Heart left ventricle (tissue), 16 donors: ENCODE measurements at regions of chr9 and their contacts with region 1.

Region 1: DNA sequence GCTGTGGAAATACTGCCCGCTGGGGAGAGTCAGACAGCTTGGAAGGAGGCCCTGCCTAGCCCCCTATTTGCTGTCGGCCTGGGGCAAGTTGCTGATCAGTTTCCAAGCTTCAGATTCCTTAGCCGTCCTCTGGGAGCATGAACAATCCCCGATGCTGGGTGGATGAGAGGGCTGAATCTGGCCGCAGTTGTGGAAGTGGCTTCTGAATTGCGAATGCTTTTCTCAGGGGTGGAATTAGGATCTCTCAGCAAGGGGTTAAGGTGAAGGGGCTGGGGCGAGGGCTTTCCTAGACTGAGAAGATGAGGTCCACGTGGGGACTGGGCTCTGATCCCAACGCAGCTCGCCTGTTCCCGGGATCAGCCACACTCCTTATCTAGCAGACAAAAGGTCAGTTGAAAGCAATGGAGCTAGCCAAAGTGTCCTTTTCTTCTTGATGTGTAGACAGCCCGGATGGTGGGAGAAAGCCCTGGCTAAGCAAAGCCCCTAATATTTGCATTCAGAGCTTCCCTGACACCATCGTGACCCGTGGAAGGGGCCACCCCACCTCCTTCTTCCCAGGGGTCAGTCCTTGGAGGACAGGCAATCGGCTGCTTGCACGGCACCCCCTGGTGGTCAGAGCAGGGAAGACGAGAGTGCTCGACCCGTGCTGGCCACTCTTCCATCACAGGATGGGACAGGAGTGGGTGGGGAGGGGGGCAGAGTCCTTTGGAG is 54.9 kb downstream of the COL15A1 start:
- DNase-seq: peak; percentile 86 to 92 (median 91)
- ATAC-seq: peak; percentile 83 to 87 (median 85)
- H3K4me3 ChIP-seq: peak overlapping the region in 2 of 12 donors; percentile 5 to 10
- H3K27ac ChIP-seq: peak overlapping the region; percentile 55 to 89 (median 78)
- H3K4me1 ChIP-seq: peaks cover 4 to 74% (median 56%) of the 10 kb centered on the region in 12 donors
- H3K27me3 ChIP-seq: no peaks in the 10 kb centered on the region
- CTCF ChIP-seq: peak; percentile 80 to 96 (median 91)
- POLR2A ChIP-seq: no peak

Region 2: GRCh38 chr9:98848450-98849149 is 150.0 kb before region 1 on chr9:
- intact Hi-C with region 1: loop called in 3 of 10 experiments (anchors 1 to 5 kb)
- DNase-seq: peak; percentile 87 to 95 (median 92)
- ATAC-seq: peak; percentile 98 to 99 (median 98)
- H3K4me3 ChIP-seq: peak overlapping the region in 10 of 12 donors; percentile 13 to 62 (median 42)
- H3K27ac ChIP-seq: peak overlapping the region in 7 of 12 donors; percentile 2 to 78 (median 40)
- H3K4me1 ChIP-seq: peaks cover 0 to 9% (median 3%) of the 10 kb centered on the region in 12 donors
- H3K27me3 ChIP-seq: no peaks in the 10 kb centered on the region
- CTCF ChIP-seq: peak; percentile 87 to 98 (median 93)
- POLR2A ChIP-seq: no peak

Region 3: GRCh38 chr9:98916660-98917059 is 81.9 kb before region 1 on chr9:
- intact Hi-C with region 1: loop called in 2 of 10 experiments (anchors 5 kb)
- DNase-seq: peak; percentile 64 to 87 (median 85)
- ATAC-seq: peak; percentile 71 to 88 (median 77)
- H3K4me3 ChIP-seq: no peak overlapping the region
- H3K27ac ChIP-seq: peak overlapping the region in 11 of 12 donors; percentile 35 to 87 (median 68)
- H3K4me1 ChIP-seq: peaks cover 0 to 32% (median 20%) of the 10 kb centered on the region in 12 donors
- H3K27me3 ChIP-seq: no peaks in the 10 kb centered on the region
- CTCF ChIP-seq: no peak
- POLR2A ChIP-seq: no peak

Region 4: GRCh38 chr9:99057665-99058625 is 59.3 kb after region 1 on chr9:
- intact Hi-C with region 1: no loop called
- DNase-seq: peak in 1 of 5 donors; percentile 49
- ATAC-seq: peak in 3 of 4 donors; percentile 38 to 67 (median 59)
- H3K4me3 ChIP-seq: peak overlapping the region in 1 of 12 donors; percentile 25
- H3K27ac ChIP-seq: peak overlapping the region in 11 of 12 donors; percentile 36 to 92 (median 69)
- H3K4me1 ChIP-seq: peaks cover 0 to 72% (median 12%) of the 10 kb centered on the region in 12 donors
- H3K27me3 ChIP-seq: no peaks in the 10 kb centered on the region
- CTCF ChIP-seq: no peak
- POLR2A ChIP-seq: no peak

Region 5: GRCh38 chr9:99104459-99105151 is 106.0 kb after region 1 on chr9 and contains the start of gene TGFBR1:
- intact Hi-C with region 1: loop called in 1 of 10 experiments (anchors 10 kb)
- DNase-seq: peak; percentile 94 to 98 (median 96)
- ATAC-seq: peak; percentile 89 to 96 (median 93)
- H3K4me3 ChIP-seq: peak within 1 kb of the TSS; percentile 63 to 98 (median 88)
- H3K27ac ChIP-seq: peak within 1 kb of the TSS; percentile 73 to 93 (median 90)
- H3K4me1 ChIP-seq: peaks cover 0 to 54% (median 39%) of the 10 kb centered on the region in 12 donors
- H3K27me3 ChIP-seq: no peaks in the 10 kb centered on the region
- CTCF ChIP-seq: peak in 4 of 12 donors; percentile 5 to 31 (median 24)
- POLR2A ChIP-seq: peak; percentile 72 to 91
- total RNA-seq, gene TGFBR1: 8.5 to 41.0 (median 14.7) TPM

Region 6: DNA sequence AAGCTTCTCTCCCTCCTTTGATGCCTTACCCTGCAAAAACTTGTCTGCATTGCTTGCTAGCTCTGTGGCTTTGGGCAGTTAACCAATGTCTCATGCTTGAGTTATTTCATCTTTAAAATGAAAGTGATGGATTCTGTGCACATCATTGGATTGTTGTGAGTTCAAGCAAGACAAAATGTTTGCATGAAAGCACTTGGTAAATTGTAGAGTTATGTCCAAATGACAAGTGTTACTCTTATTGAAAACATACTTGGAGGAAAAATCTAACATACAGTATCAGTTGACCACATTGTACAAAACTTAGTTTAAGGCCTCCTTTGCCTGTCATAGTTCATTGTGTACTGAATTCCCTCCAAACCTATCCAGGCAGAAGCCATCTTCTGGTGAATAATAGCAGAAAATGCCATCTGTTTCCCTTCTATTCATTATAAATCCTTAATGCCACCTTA is 136.3 kb after region 1 on chr9:
- intact Hi-C with region 1: loop called (anchors 1 to 5 kb)
- DNase-seq: no peak
- ATAC-seq: no peak
- H3K4me3 ChIP-seq: no peak overlapping the region
- H3K27ac ChIP-seq: no peak overlapping the region
- H3K4me1 ChIP-seq: peaks cover 0 to 65% (median under 1%) of the 10 kb centered on the region in 12 donors
- H3K27me3 ChIP-seq: no peaks in the 10 kb centered on the region
- CTCF ChIP-seq: no peak
- POLR2A ChIP-seq: no peak